Activated B cell treated with CpG ODN at 0.5 μM for 24 hours (primary cell): ENCODE measurements at regions of chr2 and their contacts with region 1.

Region 1: GRCh38 chr2:131492418-131493198 is 411 bp upstream of the MZT2A start:
- DNase-seq: peak; percentile 97
- ATAC-seq: peak; percentile 86
- H3K4me3 Mint-ChIP-seq: peak overlapping the region; percentile 97
- H3K27ac Mint-ChIP-seq: peak overlapping the region; percentile 83
- H3K4me1 Mint-ChIP-seq: peaks cover 38% of the 10 kb centered on the region
- H3K27me3 Mint-ChIP-seq: no peaks in the 10 kb centered on the region
- CTCF ChIP-seq: peak; percentile 39

Region 2: DNA sequence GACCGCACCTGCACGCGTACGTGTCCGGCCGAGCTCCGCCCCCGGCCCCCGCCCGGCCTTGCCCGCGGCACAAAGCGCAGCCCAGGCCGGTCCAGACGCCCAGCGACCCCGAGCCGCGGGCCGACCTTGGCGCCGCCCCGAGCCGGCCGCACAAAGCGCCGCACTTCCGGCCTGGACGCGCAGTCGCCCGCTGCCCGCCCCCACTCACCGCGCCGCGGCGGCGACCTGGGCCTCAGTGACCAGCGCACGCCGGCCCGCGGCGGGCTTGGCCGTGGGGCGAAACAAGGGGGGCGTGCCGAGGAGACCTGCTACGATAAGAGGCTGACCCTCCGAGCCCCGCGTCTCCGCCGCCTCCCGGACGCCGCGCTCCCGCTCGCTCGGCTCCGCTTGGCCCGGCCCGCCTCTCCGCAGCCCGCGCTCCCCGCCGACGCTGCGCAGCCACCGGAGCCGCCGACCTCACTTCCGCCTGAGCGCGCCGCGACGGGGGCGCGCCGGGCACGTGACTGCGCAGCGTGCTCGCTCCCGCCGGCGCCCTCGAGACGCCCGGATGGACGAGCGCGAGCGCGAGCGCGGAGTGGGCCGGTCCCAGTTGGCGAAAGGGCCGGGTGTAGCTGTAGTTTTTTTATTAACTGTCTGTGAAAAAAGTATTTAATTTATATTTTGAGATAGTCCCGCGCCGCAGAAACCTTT is 399.5 kb before region 1 on chr2 and contains the start of gene FAM168B:
- CTCF ChIA-PET with region 1: interaction called, 3 read pairs
- POLR2A ChIA-PET with region 1: interaction called, 9 read pairs
- intact Hi-C with region 1: loop called (anchors 2 kb)
- DNase-seq: peak; percentile 96
- ATAC-seq: peak; percentile 78
- H3K4me3 Mint-ChIP-seq: peak within 1 kb of the TSS; percentile 97
- H3K27ac Mint-ChIP-seq: peak within 1 kb of the TSS; percentile 98
- H3K4me1 Mint-ChIP-seq: peaks cover 22% of the 10 kb centered on the region
- H3K27me3 Mint-ChIP-seq: no peaks in the 10 kb centered on the region
- CTCF ChIP-seq: no peak
- total RNA-seq, gene FAM168B: 59.9 and 62.5 TPM in 2 replicates

Region 3: DNA sequence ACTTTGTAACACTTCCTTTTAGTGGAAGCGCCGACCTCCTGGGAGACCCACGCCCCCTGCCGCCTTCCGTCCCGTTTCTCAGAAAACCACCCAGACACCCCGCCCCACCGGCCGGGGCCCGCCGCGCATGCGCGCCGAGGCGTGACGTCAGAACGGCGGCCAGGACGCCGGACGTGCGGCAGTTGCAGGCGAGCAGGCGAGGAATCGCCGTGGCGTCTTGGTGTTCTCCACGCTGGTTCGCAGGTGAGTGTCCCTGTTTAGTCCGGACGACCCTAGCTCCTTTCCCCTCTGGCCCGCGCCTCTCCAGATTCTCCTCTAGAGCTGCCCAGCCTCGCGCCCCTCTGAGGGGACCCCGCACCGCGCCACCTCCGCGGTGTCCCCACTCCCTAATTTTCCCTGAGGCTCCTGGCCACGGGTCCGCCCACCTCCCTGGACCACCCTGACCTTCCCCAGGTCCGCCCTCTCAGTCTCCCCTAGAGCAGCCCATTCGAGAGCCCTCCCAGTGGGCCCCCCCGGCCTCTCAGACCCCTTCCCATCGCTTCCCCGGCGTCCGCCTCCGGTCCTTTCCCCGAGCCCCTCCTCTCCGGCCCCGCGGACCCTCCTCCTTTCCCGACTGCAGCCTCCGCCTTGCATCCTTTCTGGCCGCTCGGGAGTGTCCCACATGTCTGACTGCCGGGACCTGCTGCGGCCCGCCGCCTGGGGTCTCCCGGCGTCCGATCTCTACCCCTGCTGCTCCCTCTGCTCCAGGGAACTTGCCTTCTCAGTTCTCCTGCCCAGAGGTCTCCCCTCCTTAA is 387.3 kb before region 1 on chr2 and contains the start of gene PLEKHB2:
- CTCF ChIA-PET with region 1: no interaction called
- POLR2A ChIA-PET with region 1: interaction called, 11 read pairs
- intact Hi-C with region 1: loop called (anchors 1 kb)
- DNase-seq: peak; percentile 97
- ATAC-seq: peak; percentile 84
- H3K4me3 Mint-ChIP-seq: peak within 1 kb of the TSS; percentile 96
- H3K27ac Mint-ChIP-seq: peak within 1 kb of the TSS; percentile 91
- H3K4me1 Mint-ChIP-seq: peaks cover 34% of the 10 kb centered on the region
- H3K27me3 Mint-ChIP-seq: no peaks in the 10 kb centered on the region
- CTCF ChIP-seq: no peak
- total RNA-seq, gene PLEKHB2: 32.3 and 33.6 TPM in 2 replicates

Region 4: DNA sequence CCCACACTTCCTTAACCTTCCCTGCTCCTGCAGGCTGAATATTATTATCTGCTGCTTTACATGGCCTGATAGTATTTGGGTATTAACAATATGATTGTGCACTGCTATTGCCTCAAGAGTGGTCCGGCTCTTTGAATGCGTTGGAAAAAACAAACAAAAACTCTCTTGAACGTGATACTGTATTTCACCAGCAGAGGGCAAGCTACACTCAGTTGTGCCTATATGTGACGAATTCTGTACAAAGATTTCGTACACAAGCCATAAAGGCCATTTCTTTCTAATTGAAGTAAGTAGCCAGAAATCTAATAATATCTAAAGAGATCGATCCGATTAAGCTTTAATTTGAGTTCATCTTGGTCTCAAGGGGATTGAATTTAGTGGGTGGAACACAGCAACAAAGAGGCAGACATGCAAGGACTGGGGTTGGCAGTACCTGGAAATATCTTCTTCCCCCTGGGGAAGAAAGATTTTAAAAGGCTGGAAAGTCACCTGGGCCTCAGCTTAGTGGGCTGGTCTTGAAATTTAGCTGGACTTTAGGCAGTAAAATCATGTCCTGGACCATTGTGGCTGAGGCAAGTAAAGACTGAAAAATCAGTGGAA is 79.4 kb before region 1 on chr2:
- CTCF ChIA-PET with region 1: no interaction called
- POLR2A ChIA-PET with region 1: no interaction called
- intact Hi-C with region 1: loop called (anchors 1 kb)
- DNase-seq: no peak
- ATAC-seq: peak; percentile 65
- H3K4me3 Mint-ChIP-seq: no peak overlapping the region
- H3K27ac Mint-ChIP-seq: no peak overlapping the region
- H3K4me1 Mint-ChIP-seq: no peaks in the 10 kb centered on the region
- H3K27me3 Mint-ChIP-seq: peaks cover 36% of the 10 kb centered on the region
- CTCF ChIP-seq: peak; percentile 57

Region 5: DNA sequence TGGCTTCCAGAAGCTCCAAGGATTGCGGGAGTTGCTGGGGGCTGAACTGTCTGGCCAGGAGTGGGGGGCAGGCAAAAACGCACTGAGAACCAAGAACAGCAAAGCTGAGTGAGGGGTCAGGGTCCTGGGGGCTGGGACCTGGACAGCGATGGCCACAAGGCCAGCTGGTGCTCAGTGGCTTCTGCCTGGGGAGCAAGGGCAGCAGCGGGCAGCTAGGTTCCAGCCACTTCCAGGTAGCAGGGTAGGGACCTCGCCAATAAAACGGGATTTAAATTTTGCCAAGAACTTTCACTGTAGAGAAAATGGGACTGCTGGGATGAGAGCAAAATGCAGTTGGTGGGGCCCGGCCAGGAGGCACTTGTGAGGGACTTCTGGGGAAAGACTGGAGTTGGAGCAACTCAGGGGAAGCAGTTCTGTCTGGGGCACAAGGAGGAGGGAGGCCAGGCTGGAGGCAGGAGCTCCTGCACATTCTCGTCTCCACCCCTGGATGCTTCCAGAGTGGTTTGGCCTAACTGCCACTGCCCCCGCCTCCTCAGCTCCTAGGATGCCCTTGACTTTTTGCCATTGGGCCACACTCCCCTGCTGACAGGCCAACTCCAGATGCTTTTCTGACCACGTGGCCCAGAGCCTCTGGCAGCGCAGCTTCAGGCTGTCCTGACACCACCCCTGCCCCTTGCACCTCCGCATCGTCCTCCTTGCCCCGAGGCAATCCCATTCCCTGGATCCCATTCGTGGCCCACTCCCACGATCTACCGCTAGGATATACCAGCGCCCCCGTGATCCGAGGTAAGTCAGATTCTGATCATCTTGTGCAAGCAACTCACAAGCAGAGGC is 29.6 kb after region 1 on chr2:
- CTCF ChIA-PET with region 1: no interaction called
- POLR2A ChIA-PET with region 1: interaction called, 5 read pairs
- intact Hi-C with region 1: loop called (anchors 1 kb)
- DNase-seq: no peak
- ATAC-seq: no peak
- H3K4me3 Mint-ChIP-seq: no peak overlapping the region
- H3K27ac Mint-ChIP-seq: no peak overlapping the region
- H3K4me1 Mint-ChIP-seq: no peaks in the 10 kb centered on the region
- H3K27me3 Mint-ChIP-seq: no peaks in the 10 kb centered on the region
- CTCF ChIP-seq: no peak

Region 6: GRCh38 chr2:131584940-131585339 is 92.3 kb after region 1 on chr2:
- CTCF ChIA-PET with region 1: no interaction called
- POLR2A ChIA-PET with region 1: interaction called, 3 read pairs
- intact Hi-C with region 1: loop called (anchors 1 kb)
- DNase-seq: no peak
- ATAC-seq: peak; percentile 77
- H3K4me3 Mint-ChIP-seq: peak overlapping the region; percentile 50
- H3K27ac Mint-ChIP-seq: peak overlapping the region; percentile 72
- H3K4me1 Mint-ChIP-seq: peaks cover 47% of the 10 kb centered on the region
- H3K27me3 Mint-ChIP-seq: peaks cover 14% of the 10 kb centered on the region
- CTCF ChIP-seq: no peak

Region 7: GRCh38 chr2:131835621-131836091 is 343.0 kb after region 1 on chr2:
- CTCF ChIA-PET with region 1: no interaction called
- POLR2A ChIA-PET with region 1: no interaction called
- intact Hi-C with region 1: no loop called
- DNase-seq: no peak
- ATAC-seq: no peak
- H3K4me3 Mint-ChIP-seq: no peak overlapping the region
- H3K27ac Mint-ChIP-seq: no peak overlapping the region
- H3K4me1 Mint-ChIP-seq: no peaks in the 10 kb centered on the region
- H3K27me3 Mint-ChIP-seq: peaks cover 7% of the 10 kb centered on the region
- CTCF ChIP-seq: no peak